ENCODE measurements at regions of chr11 and their contacts with region 1.

Region 1: DNA sequence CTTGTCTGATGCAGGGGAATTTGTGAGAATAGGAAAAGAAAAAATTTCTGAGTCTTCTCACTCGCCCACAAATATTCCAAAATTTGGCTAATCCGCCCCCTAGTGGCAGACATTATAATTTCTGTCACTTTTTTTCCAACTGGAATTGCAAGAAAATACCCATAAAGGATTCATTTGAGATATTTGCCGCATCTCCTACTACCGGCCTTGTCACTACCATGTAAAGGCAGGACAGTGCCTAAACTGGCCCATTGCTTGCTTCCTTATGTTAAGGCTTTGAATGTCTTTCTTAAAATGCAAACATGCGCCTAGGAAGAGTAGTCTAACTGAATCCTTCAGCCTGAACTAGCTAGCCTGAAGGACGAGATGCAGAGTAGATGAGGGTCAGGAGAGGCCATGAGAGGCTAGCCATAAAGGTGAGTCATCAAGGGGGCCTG is 9.3 kb upstream of the CEP295 start:
- DNase-seq: peak in 5 of 14 experiments; percentile 19 to 63 (median 47)
- ATAC-seq: peak; percentile 17
- H3K4me3 ChIP-seq: no peak overlapping the region
- H3K4me3 Mint-ChIP-seq: no peak overlapping the region
- H3K27ac ChIP-seq: no peak overlapping the region
- H3K27ac Mint-ChIP-seq: no peak overlapping the region
- H3K4me1 ChIP-seq: peaks cover 5% of the 10 kb centered on the region
- H3K4me1 Mint-ChIP-seq: peaks cover 13% of the 10 kb centered on the region
- H3K27me3 ChIP-seq: no peaks in the 10 kb centered on the region
- H3K27me3 Mint-ChIP-seq: peaks cover 5% of the 10 kb centered on the region
- CTCF ChIP-seq: peak; percentile 83

Region 2: DNA sequence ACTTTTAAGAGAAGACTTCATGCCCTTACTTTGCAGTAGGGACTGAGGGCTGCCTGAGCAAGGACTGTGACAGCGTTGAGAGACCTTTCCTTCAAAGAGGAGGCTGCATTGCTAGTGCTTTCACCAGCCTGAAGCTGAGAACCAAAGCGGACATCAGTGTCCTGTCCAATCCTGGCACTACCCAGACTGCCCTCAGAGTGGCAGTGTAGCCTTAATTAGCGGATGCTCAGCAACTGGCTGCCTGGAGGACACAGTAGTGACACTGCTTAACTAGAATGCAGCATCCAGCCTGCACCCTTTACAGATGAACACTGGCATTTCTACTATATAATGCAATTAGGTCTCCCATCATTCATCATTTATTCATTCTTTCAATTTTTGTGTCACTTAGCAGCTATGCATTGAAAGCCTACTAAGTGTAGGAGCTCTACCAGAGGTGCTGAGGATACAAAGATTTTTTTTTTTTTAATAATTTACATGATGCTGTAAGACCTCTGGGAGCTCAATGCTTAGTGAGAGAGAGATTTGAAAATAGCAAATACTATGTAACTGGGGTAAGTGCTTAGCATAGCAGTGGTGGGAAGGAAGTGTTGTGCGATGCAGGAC is 417.5 kb before region 1 on chr11:
- CTCF ChIA-PET with region 1: interaction called, 8 read pairs
- POLR2A ChIA-PET with region 1: no interaction called
- intact Hi-C with region 1: loop called (anchors 1 kb)
- DNase-seq: peak; percentile 44 to 79 (median 60)
- ATAC-seq: peak; percentile 100
- H3K4me3 ChIP-seq: no peak overlapping the region
- H3K4me3 Mint-ChIP-seq: no peak overlapping the region
- H3K27ac ChIP-seq: no peak overlapping the region
- H3K27ac Mint-ChIP-seq: no peak overlapping the region
- H3K4me1 ChIP-seq: no peaks in the 10 kb centered on the region
- H3K4me1 Mint-ChIP-seq: no peaks in the 10 kb centered on the region
- H3K27me3 ChIP-seq: peaks cover 0 to 16% of the 10 kb centered on the region in 2 experiments
- H3K27me3 Mint-ChIP-seq: peaks cover 41% of the 10 kb centered on the region
- CTCF ChIP-seq: peak; percentile 80

Region 3: GRCh38 chr11:93548679-93549319 is 103.4 kb before region 1 on chr11:
- CTCF ChIA-PET with region 1: no interaction called
- POLR2A ChIA-PET with region 1: no interaction called
- intact Hi-C with region 1: loop called (anchors 5 to 10 kb)
- DNase-seq: no peak
- ATAC-seq: no peak
- H3K4me3 ChIP-seq: no peak overlapping the region
- H3K4me3 Mint-ChIP-seq: no peak overlapping the region
- H3K27ac ChIP-seq: no peak overlapping the region
- H3K27ac Mint-ChIP-seq: no peak overlapping the region
- H3K4me1 ChIP-seq: peaks cover 8% of the 10 kb centered on the region
- H3K4me1 Mint-ChIP-seq: peaks cover 9% of the 10 kb centered on the region
- H3K27me3 ChIP-seq: no peaks in the 10 kb centered on the region
- H3K27me3 Mint-ChIP-seq: peaks cover 7% of the 10 kb centered on the region
- CTCF ChIP-seq: no peak

Region 4: DNA sequence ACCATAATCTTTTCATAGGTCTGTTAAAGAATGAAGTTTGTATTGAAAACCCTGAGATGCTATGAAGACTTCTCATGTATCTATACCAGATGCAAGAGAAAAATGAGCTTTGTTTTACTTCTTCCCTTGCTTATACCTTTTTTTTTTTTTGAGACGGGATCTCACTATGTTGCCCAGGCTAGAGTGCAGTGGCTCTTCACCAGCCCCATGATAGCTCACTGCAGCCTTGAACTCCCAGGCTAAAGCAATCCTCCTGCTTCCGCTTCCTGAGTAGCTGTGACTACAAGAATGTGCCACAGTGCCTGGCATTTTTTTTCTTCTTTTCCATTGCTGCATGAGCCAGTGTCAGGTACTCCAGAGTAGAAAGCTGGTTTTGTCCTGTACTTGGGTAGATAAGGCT is 20.1 kb after region 1 on chr11:
- CTCF ChIA-PET with region 1: no interaction called
- POLR2A ChIA-PET with region 1: no interaction called
- intact Hi-C with region 1: no loop called
- DNase-seq: no peak
- ATAC-seq: no peak
- H3K4me3 ChIP-seq: no peak overlapping the region
- H3K4me3 Mint-ChIP-seq: no peak overlapping the region
- H3K27ac ChIP-seq: no peak overlapping the region
- H3K27ac Mint-ChIP-seq: no peak overlapping the region
- H3K4me1 ChIP-seq: no peaks in the 10 kb centered on the region
- H3K4me1 Mint-ChIP-seq: peaks cover 8% of the 10 kb centered on the region
- H3K27me3 ChIP-seq: no peaks in the 10 kb centered on the region
- H3K27me3 Mint-ChIP-seq: no peaks in the 10 kb centered on the region
- CTCF ChIP-seq: no peak

Measured in CD4-positive, alpha-beta T cell (primary cell).